K562 (cell line): ENCODE measurements at regions of chrX and their contacts with region 1.

Region 1: DNA sequence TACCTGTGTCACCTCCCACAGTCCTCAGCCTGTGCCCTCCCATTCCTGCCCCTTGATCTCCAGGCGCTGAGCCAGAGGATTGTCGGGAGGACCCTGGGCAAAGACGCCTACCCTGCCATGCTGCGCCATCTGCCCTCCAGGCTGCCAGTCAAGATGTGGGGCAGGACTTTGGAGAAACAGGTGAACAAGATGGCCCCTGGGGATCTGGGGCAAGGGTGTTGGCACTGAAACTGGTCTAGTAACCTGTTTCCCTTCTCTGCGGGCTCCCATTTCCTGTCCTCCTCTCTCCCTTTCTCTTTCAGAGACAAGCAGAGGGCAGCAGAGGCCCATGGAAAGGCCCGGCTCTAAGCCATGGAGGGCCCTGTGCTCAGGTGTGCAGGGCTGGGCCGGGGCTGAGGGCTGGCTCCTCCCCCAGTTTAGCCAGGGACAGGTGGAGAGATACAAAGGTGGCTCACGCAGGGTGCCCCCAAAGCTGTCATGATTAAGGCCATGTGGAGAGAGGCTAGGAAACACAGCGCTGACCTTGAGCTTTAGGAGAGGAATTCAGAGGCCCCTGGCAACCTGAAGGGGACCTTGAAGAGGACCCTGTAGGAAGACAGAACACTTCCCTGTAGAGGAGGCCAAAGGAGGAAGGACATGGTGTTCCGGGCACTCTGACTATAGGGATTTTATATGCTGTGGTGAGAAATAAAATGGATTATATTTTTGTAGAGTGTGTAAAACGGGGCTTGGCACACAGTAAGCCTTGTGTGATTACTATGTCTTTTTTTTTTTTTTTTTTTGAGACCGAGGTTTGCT is at the start of gene GLOD5:
- DNase-seq: peak; percentile 46 to 75 (median 56)
- ATAC-seq: peak; percentile 97
- H3K4me3 ChIP-seq: no peak within 1 kb of the TSS
- H3K27ac ChIP-seq: peak within 1 kb of the TSS; percentile 33; the same call in 1 of the 3 replicates
- H3K4me1 ChIP-seq: peaks cover 16 to 19% of the 10 kb centered on the region in 2 experiments
- H3K27me3 ChIP-seq: no peaks in the 10 kb centered on the region
- CTCF ChIP-seq: peak; percentile 61 to 66 (median 61)
- EP300 ChIP-seq: no peak
- POLR2A ChIP-seq: no peak
- RAD21 ChIP-seq: peak; percentile 11 to 80; a peak in 2 of 4 replicates
- polyA plus RNA-seq, gene GLOD5: 3.8 to 4.4 TPM

Region 2: DNA sequence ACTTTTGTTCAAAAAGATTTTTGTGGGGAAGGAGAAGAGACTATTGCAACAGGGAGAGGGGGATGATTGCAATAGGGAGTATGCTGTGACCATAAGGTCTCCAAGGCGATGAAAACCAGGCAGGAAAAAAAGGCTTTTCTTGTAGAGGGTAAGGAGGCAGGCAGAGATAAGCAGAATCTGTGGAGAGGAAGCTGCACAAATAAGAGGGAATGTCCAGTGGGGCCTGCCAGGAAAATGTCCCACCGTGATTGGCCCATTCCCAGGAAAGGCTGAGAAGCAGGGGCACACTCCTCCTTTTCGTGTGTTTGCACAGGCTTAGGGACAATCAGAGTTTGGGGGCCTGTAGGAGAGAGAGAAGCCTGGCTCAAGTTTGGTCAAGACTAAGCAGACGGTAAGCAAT is 726.0 kb before region 1 on chrX:
- CTCF ChIA-PET with region 1: no interaction called
- POLR2A ChIA-PET with region 1: no interaction called
- in situ Hi-C with region 1: no loop called
- intact Hi-C with region 1: no loop called
- DNase-seq: no peak
- ATAC-seq: no peak
- H3K4me3 ChIP-seq: no peak overlapping the region
- H3K27ac ChIP-seq: no peak overlapping the region
- H3K4me1 ChIP-seq: no peaks in the 10 kb centered on the region
- H3K27me3 ChIP-seq: peaks cover 0 to 5% of the 10 kb centered on the region in 2 experiments; a peak in 2 of 5 replicates
- CTCF ChIP-seq: no peak
- EP300 ChIP-seq: no peak
- POLR2A ChIP-seq: no peak
- RAD21 ChIP-seq: no peak

Region 3: GRCh38 chrX:48789366-48790220 is 27.7 kb after region 1 on chrX:
- CTCF ChIA-PET with region 1: no interaction called
- POLR2A ChIA-PET with region 1: no interaction called
- in situ Hi-C with region 1: no loop called
- intact Hi-C with region 1: loop called (anchors 2 kb)
- DNase-seq: peak in 2 of 4 experiments; percentile 50 to 75
- ATAC-seq: no peak
- H3K4me3 ChIP-seq: peak overlapping the region; percentile 75
- H3K27ac ChIP-seq: peak overlapping the region; percentile 85
- H3K4me1 ChIP-seq: peaks cover 51 to 65% of the 10 kb centered on the region in 2 experiments
- H3K27me3 ChIP-seq: no peaks in the 10 kb centered on the region
- CTCF ChIP-seq: no peak
- EP300 ChIP-seq: peak; percentile 38; the same call in 1 of the 2 replicates
- POLR2A ChIP-seq: no peak
- RAD21 ChIP-seq: no peak

Region 4: DNA sequence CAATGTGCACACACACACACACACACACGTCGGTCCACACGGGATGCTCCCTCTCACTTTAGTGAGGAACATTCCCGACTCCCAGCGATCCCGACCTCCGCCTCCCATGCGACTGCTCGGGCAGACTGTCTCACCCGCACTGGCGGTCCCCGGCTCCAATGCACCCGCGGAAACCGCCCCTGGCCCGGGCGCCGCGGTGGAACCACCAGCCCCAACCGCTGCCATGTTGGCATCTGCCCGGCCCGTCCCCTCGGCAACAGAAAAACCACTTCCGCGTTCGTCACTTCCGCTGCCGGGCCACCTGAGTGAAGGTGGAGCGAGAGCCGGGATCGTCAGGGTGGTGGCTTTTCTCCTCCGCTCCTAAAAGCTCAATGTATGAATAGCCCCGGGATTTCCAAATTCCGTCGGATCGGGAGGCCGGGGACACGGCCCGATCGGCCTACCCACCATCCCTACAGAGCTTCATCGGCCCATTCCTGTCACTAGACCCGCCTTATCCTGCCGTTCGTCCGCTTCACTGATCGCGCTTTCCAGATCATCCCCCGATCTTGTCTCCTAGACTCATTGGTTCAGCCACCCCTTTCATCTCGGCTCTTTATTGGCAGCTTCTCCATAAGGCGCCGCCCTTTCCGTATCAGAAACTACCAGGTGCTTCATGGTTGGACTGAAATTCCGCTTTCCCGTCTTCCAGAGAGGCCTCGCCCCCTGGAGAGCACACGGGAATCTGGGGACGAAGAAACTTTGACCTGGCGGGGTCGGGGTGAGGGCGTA is 149.7 kb after region 1 on chrX and contains the start of gene SLC35A2:
- CTCF ChIA-PET with region 1: no interaction called
- POLR2A ChIA-PET with region 1: no interaction called
- in situ Hi-C with region 1: no loop called
- intact Hi-C with region 1: loop called (anchors 5 kb)
- DNase-seq: peak; percentile 70 to 88 (median 76)
- ATAC-seq: peak; percentile 91
- H3K4me3 ChIP-seq: peak within 1 kb of the TSS; percentile 92
- H3K27ac ChIP-seq: peak within 1 kb of the TSS; percentile 89
- H3K4me1 ChIP-seq: peaks cover 30 to 34% of the 10 kb centered on the region in 2 experiments
- H3K27me3 ChIP-seq: no peaks in the 10 kb centered on the region
- CTCF ChIP-seq: no peak
- EP300 ChIP-seq: 0 out of 2 replicates have a peak, but pooled peaks have one; percentile 0
- POLR2A ChIP-seq: peak; percentile 85
- RAD21 ChIP-seq: 0 out of 4 replicates have a peak, but pooled peaks of 1 of the 2 experiments have one; percentile 12
- polyA plus RNA-seq, gene SLC35A2: 3.3 to 5.2 TPM